ENCODE measurements at regions of chr6 and their contacts with region 1.

Region 1: DNA sequence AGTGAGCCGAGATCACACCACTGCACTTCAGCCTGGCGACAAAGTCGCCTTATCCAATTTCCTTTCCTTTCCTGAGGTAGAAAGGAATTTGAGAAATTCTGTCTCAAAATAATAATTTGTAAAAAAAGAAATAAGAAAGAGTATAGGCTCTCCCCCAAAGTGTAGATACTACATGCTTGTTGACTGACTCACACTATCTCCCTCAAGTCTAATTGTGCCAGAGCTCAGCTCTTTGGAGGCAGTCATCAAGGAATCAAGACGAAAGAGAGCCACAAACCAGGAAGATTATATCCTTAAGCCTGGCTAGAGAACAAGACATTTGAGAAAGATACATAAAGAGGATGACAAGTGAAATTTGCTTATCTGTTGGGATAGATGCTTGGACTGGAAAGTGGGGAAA is 3.7 kb upstream of the FKBPL start:
- DNase-seq: no peak
- ATAC-seq: no peak
- H3K4me3 ChIP-seq: no peak overlapping the region
- H3K27ac ChIP-seq: no peak overlapping the region
- H3K4me1 ChIP-seq: peaks cover 6 to 16% (median 9%) of the 10 kb centered on the region in 12 donors
- H3K27me3 ChIP-seq: no peaks in the 10 kb centered on the region
- CTCF ChIP-seq: no peak
- POLR2A ChIP-seq: no peak

Region 2: DNA sequence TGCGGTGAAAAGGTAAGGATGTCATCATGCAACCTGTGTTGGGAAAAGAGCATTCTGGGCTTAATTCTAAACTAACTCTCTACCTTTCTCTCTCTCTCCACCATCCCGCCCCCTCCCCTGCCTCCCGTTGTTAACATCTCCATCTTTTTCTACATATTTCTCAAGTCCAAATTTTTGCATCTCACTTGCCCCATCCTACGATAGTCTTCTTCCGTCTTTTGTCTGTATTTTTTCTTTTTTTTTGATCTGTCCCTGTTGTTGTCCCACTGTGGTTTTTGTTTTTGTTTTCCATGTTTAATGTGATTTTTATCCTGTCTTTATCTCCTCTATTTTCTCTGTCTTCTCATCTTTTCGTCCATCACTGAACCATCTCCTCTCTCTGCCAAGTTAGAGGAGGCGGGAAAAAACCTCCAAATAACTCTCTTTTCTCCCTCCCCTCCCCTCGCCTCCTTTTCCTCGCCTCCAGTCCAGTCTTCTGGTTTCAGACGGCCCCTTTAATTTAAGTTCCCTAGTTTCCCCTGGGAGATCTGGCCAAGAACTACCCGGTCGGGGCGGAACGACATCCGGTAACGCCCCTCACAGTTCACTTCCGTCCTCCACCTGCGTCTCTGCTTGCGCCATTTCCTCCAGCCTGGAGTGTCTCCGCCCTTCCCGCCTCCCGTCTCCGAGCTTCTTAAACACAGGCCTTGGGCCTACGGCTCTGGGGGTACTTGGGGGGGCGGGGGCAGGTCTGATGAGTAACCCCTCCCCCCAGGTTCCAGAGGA is 586.6 kb before region 1 on chr6 and contains the start of gene NFKBIL1:
- intact Hi-C with region 1: no loop called
- DNase-seq: peak; percentile 94 to 98 (median 98)
- ATAC-seq: peak; percentile 96 to 98 (median 97)
- H3K4me3 ChIP-seq: peak within 1 kb of the TSS; percentile 4 to 64 (median 56)
- H3K27ac ChIP-seq: peak within 1 kb of the TSS; percentile 63 to 95 (median 89)
- H3K4me1 ChIP-seq: peaks cover 0 to 37% (median 22%) of the 10 kb centered on the region in 12 donors
- H3K27me3 ChIP-seq: no peaks in the 10 kb centered on the region
- CTCF ChIP-seq: peak in 2 of 12 donors; percentile 1 to 21
- POLR2A ChIP-seq: peak in 1 of 2 donors; percentile 62
- total RNA-seq, gene NFKBIL1: 10.0 to 17.8 (median 12.4) TPM

Region 3: GRCh38 chr6:32076321-32076809 is 57.4 kb before region 1 on chr6:
- intact Hi-C with region 1: no loop called
- DNase-seq: peak in 1 of 5 donors; percentile 66
- ATAC-seq: peak in 2 of 4 donors; percentile 28 to 51
- H3K4me3 ChIP-seq: no peak overlapping the region
- H3K27ac ChIP-seq: peak overlapping the region in 6 of 12 donors; percentile 12 to 66 (median 43)
- H3K4me1 ChIP-seq: peaks cover 0 to 35% (median 2%) of the 10 kb centered on the region in 12 donors
- H3K27me3 ChIP-seq: no peaks in the 10 kb centered on the region
- CTCF ChIP-seq: no peak
- POLR2A ChIP-seq: no peak

Region 4: DNA sequence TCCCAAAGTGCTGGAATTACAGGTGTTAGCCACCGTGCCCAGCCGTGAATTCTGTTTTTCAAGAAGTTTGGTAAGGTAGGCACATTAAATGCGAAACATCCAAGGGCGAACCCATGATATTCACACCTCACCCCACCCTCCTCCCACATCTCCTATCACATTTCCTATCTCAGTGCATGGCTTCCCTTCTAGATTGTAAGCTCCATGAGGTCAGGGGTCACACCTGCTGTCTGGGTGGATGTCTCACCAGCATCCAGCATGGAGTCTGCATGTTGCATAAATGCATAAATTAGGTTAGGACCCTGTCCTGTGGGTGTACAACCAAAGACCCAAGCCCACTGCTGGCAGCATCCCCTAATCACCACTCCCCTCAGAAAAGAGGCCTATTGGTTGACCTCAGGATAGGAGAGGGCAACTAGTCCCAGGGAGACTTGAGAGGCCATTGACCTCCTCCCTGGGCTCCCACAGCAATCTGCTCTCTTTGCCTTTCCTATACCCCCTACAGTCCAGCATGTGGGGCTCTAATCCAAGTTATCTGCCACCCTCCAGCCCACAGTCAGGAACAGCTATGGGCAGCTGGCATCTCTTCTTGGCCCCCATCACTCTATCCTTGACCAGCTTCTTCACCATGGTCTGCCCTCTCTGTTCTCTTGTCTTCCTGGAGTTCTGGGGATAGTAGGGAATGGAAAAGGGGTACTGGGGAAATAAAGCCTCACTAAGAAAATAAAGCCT is 13.8 kb after region 1 on chr6:
- intact Hi-C with region 1: loop called in 3 of 10 experiments (anchors 1 to 2 kb)
- DNase-seq: no peak
- ATAC-seq: no peak
- H3K4me3 ChIP-seq: no peak overlapping the region
- H3K27ac ChIP-seq: no peak overlapping the region
- H3K4me1 ChIP-seq: peaks cover 0 to 18% (median 8%) of the 10 kb centered on the region in 12 donors
- H3K27me3 ChIP-seq: peaks cover 0 to 40% (median 6%) of the 10 kb centered on the region in 9 donors
- CTCF ChIP-seq: no peak
- POLR2A ChIP-seq: no peak